ENCODE measurements at regions of chr17 and their contacts with region 1.

Region 1: GRCh38 chr17:5592382-5592781 is 8.1 kb upstream of the NLRP1 start:
- DNase-seq: no peak

Region 2: GRCh38 chr17:5651348-5651747 is 59.0 kb after region 1 on chr17:
- intact Hi-C with region 1: loop called (anchors 10 kb)
- DNase-seq: peak in 1 of 10 donors; percentile 8

Region 3: DNA sequence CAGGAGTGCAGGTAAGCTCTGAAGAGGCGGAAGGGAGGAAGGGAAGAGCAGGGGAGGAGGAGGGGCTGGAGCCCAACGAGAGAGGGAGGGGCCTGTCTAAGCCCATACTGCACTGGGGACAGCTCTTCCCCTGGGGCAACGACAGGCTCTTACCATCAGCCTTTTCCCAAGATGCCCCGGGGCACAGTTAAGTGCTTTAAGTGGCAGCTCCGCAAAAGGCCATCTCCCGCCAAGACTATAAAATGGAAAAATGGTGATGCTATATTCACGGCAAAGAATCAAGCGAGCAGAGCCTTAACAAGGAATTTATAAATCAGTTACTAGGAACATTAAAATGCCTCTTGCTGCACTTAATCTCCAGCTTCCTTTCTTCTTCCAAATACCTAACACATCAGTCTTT is 102.2 kb after region 1 on chr17:
- intact Hi-C with region 1: no loop called
- DNase-seq: no peak

Region 4: GRCh38 chr17:5706577-5707216 is 114.3 kb after region 1 on chr17:
- intact Hi-C with region 1: loop called (anchors 2 kb)
- DNase-seq: peak; percentile 32 to 93 (median 74)